ENCODE measurements at regions of chrX and their contacts with region 1.

Region 1: GRCh38 chrX:106415276-106415895 is 196.4 kb upstream of the RADX start:
- DNase-seq: no peak
- H3K4me3 ChIP-seq: no peak overlapping the region
- H3K27ac ChIP-seq: no peak overlapping the region
- H3K4me1 ChIP-seq: no peaks in the 10 kb centered on the region
- H3K27me3 ChIP-seq: no peaks in the 10 kb centered on the region
- CTCF ChIP-seq: peak in 2 of 3 experiments; percentile 44 to 54; a peak in 2 of 4 replicates
- EP300 ChIP-seq: no peak
- POLR2A ChIP-seq: no peak
- RAD21 ChIP-seq: peak; percentile 46 to 56

Region 2: GRCh38 chrX:106378616-106379015 is 36.8 kb before region 1 on chrX:
- CTCF ChIA-PET with region 1: no interaction called
- POLR2A ChIA-PET with region 1: no interaction called
- DNase-seq: no peak
- H3K4me3 ChIP-seq: no peak overlapping the region
- H3K27ac ChIP-seq: no peak overlapping the region
- H3K4me1 ChIP-seq: no peaks in the 10 kb centered on the region
- H3K27me3 ChIP-seq: no peaks in the 10 kb centered on the region
- CTCF ChIP-seq: no peak
- EP300 ChIP-seq: no peak
- POLR2A ChIP-seq: no peak
- RAD21 ChIP-seq: no peak

Region 3: GRCh38 chrX:106404512-106404911 is 10.9 kb before region 1 on chrX:
- CTCF ChIA-PET with region 1: interaction called, 12 read pairs
- POLR2A ChIA-PET with region 1: no interaction called
- DNase-seq: no peak
- H3K4me3 ChIP-seq: no peak overlapping the region
- H3K27ac ChIP-seq: no peak overlapping the region
- H3K4me1 ChIP-seq: no peaks in the 10 kb centered on the region
- H3K27me3 ChIP-seq: no peaks in the 10 kb centered on the region
- CTCF ChIP-seq: peak in 1 of 3 experiments; percentile 10; a peak in 1 of 4 replicates
- EP300 ChIP-seq: no peak
- POLR2A ChIP-seq: no peak
- RAD21 ChIP-seq: peak; percentile 12 to 45; a peak in 2 of 4 replicates

Region 4: GRCh38 chrX:106467422-106467821 is 52.0 kb after region 1 on chrX:
- CTCF ChIA-PET with region 1: interaction called, 13 read pairs
- POLR2A ChIA-PET with region 1: no interaction called
- DNase-seq: peak in 1 of 2 experiments; percentile 57
- H3K4me3 ChIP-seq: no peak overlapping the region
- H3K27ac ChIP-seq: no peak overlapping the region
- H3K4me1 ChIP-seq: no peaks in the 10 kb centered on the region
- H3K27me3 ChIP-seq: no peaks in the 10 kb centered on the region
- CTCF ChIP-seq: peak; percentile 51 to 62 (median 58)
- EP300 ChIP-seq: no peak
- POLR2A ChIP-seq: no peak
- RAD21 ChIP-seq: peak; percentile 56 to 67

Region 5: DNA sequence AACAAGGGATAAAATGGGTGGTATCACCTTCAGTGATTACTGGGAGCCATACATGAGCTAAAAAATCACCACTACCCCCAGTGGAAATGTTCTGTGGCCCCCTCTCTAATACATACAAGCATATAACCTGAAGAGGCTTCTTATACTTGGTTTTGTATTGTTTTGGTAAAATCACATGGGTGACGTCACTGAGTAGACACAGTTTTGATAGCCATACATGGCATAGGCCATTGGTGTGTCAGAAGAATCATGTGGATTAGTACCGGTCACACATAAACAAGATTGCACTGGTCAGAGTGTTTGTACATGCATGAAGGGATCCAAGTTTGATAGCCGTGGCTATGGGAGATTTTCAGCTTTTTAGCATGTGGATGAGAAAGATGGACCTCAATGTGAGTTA is 64.5 kb after region 1 on chrX:
- CTCF ChIA-PET with region 1: no interaction called
- POLR2A ChIA-PET with region 1: no interaction called
- DNase-seq: no peak
- H3K4me3 ChIP-seq: no peak overlapping the region
- H3K27ac ChIP-seq: no peak overlapping the region
- H3K4me1 ChIP-seq: no peaks in the 10 kb centered on the region
- H3K27me3 ChIP-seq: no peaks in the 10 kb centered on the region
- CTCF ChIP-seq: no peak
- EP300 ChIP-seq: no peak
- POLR2A ChIP-seq: no peak
- RAD21 ChIP-seq: no peak

Measured in H1 (cell line).